Left cardiac atrium (tissue), 4 donors: ENCODE measurements at regions of chr5 and their contacts with region 1.

Region 1: GRCh38 chr5:133111299-133111698 is 59.5 kb downstream of the HSPA4 start:
- DNase-seq: peak; percentile 85
- ATAC-seq: peak; percentile 74 to 80

Region 2: GRCh38 chr5:133247881-133248624 is 136.8 kb after region 1 on chr5:
- intact Hi-C with region 1: loop called in 1 of 2 experiments (anchors 5 kb)
- DNase-seq: peak; percentile 39
- ATAC-seq: peak; percentile 63 to 70

Region 3: GRCh38 chr5:133287500-133287899 is 176.2 kb after region 1 on chr5:
- intact Hi-C with region 1: loop called in 1 of 2 experiments (anchors 5 kb)
- DNase-seq: peak; percentile 50
- ATAC-seq: peak in 1 of 2 donors; percentile 27

Region 4: DNA sequence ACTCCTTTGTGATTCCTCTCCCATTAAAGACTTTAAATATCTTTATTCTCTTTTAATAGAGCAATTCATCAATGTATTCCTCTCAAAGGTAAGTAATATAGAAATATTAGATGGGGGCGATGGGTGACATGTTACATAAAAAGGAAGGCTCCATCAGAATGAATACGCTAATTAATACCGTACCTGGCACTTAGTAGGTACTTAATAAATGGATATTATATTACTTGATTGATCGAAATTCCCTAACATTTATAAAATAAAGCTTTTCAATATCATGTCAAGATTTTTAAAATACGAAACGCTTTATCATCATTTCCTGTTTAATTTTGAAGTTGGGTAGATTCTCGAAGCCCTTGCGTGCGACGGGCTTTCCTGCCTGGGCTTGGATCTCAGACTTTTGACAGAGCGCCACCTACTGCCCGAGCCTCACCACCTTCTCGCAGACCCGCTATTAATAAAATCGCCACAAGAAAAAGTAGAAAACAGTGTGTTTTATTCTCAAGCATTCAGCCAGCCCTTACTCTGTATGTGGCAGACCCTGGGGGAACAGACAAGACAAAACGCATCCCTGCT is 757.7 kb after region 1 on chr5:
- intact Hi-C with region 1: loop called (anchors 5 to 10 kb)
- DNase-seq: peak; percentile 85
- ATAC-seq: peak; percentile 75 to 81

Region 5: DNA sequence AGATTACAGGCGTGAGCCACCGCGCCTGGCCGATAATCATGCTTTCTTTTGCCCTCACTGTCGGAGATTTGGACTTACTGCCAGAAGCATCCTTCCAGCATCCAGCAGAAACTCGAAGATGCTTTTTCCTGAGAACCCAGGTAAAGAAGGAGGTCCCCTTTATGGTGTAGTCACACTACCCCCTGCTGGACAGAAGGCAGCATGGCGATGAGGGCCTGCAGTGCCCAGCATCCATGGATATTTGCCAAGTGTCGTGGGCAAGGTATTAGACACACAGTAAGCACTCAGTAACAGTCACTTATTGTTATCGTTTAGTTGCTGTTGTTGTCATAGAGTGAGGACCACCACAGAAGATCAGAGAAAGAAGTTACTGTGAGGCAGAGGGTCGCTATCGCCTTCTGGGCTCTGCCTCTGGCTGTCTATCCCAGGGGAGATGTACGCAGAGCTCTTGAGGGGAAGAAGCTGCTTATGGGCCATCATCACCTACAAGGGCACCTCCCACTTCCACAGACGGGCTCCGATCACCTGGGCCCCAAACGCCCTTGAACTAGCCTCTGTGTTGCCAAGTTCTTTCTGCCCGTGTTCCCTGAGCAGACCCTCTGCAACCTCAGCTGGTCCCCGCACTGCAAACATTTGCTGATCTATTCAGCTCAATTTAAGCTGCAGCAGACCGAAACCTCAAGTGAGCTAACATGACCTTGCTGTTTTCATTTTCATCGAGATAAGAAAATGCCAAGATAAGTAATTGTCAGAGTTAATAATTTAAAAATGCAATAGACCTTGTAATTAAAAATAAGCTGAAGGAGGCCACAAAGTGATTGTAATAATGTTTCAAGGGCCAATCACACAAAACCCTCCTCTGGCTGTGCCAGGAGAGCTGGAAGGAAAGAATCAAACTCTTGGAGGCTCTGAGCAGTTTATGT is 833.2 kb after region 1 on chr5:
- intact Hi-C with region 1: loop called in 1 of 2 experiments (anchors 10 kb)
- DNase-seq: no peak
- ATAC-seq: peak; percentile 33 to 67